Panc1 (cell line): ENCODE measurements at regions of chr14 and their contacts with region 1.

Region 1: DNA sequence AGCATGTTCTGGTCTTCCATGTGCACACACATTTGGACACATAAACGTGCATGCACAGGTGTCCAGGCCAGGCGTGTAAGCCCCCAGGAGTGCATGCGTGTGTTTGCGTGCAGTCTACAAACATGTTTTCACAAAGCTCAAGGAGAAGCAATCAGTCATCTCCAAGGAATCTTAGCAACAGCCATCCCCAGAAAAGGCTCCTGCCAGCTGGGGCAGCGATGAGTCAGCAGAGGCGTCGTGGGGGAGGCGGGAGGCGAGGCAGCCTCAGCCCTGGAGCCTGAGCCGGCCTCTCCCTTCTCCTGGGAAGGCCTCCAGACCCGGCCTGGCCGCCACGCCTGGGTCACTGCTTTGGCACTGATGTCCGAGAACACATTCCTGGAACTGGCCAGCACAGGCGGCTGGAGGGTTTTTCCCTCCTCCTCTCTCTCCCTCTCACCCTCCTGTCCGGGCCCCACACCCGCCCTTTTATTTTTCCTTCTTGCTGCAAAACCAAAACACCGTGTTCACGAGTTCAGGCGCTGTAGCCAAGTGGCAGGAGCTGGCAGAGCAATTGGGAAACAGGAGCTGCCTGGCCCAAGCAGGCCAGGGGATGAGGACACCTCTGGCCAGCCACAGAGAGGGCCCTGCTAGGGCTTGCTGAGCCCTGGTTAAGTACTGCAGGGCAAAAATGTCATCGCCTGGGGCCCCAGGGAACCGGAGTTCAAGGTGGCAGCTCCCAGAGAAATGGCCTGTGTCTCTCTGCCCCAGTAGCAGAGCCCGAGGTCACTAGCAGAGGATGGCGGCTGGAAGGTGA is 92.7 kb downstream of the LRRC74A start:
- DNase-seq: peak; percentile 74
- ATAC-seq: peak; percentile 85
- H3K4me3 ChIP-seq: 0 out of 4 replicates have a peak overlapping the region, but pooled peaks of 1 of the 2 experiments have one; percentile 8
- H3K27ac ChIP-seq: peak overlapping the region; percentile 99
- H3K4me1 ChIP-seq: peaks cover 72% of the 10 kb centered on the region
- H3K27me3 ChIP-seq: no peaks in the 10 kb centered on the region
- CTCF ChIP-seq: no peak

Region 2: DNA sequence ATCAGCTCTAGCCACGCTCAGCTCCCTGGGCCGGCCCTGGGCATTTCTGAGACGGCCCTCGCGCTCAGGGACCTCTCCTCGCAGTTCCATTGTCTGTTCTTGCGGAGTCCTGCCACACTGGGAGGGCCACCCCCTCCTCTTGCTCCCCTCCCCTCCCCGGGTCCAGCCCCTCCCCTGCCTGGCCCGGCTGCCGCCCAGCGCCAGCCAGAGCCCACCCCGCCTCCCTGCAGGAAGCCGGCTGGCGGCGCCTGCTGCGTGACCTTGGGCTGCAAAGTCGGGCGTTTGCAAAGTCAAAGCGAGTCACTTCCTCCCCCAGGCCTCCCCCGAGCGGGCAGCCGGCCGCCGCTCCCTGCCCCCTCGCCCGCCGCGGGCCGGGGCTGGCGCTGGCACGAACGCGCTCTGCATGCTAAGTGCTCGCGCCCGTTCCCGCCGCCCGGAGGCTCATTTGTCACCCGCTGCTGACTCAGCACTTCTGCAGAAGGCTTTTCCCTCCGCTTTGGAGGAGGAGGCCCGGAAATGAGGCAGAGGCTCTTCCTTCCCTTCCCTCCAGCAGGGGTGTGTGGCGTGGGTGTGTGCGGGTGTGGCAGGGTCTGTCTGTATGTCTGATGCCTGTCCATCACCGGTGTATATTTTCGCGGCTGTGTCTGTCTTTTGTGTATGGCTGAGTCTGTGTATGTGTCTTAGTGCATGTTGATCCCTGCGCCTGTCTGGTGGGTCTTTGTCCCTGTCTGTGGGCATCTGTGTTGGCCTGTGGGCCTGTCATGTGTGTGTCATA is 37.6 kb after region 1 on chr14:
- CTCF ChIA-PET with region 1: interaction called, 7 read pairs
- POLR2A ChIA-PET with region 1: no interaction called
- in situ Hi-C with region 1: no loop called
- intact Hi-C with region 1: loop called (anchors 5 kb)
- DNase-seq: no peak
- ATAC-seq: peak; percentile 74
- H3K4me3 ChIP-seq: peak overlapping the region; percentile 5 to 29; a peak in 3 of 4 replicates
- H3K27ac ChIP-seq: peak overlapping the region; percentile 98
- H3K4me1 ChIP-seq: peaks cover 70% of the 10 kb centered on the region
- H3K27me3 ChIP-seq: no peaks in the 10 kb centered on the region
- CTCF ChIP-seq: no peak